Gastrocnemius medialis (tissue), 4 donors: ENCODE measurements at regions of chr15 and their contacts with region 1.

Region 1: DNA sequence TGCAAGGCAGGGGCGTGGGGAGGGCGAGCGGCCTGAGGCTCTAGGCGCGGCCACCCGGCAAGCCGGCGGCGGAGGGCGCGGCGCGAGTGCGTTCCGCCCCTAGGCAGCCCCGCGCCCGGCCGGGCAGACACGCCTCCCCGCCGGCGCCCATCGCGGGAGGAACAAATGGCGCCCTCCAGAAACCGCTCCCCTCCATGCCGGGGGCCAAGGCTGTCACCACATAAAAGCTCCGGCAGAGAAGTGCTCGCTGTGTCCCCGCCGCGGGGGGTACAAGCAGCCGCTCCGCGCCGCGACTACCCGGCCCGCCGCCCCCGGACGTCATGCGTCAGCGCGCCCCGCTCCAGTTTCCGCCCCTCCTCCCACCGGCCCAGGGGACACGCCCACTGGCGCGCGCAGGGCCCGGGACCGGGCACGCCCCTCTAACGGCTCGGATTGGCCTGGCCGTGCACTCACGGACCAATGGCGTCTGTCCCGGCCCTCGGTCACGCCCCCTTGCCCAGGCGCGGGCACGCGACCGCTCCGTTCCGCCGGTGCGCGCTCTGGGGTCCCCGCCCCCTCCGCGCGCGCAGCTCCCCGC is 391 bp upstream of the KLF13 start:
- DNase-seq: peak; percentile 97 to 99
- ATAC-seq: peak; percentile 67 to 70
- H3K4me3 ChIP-seq: peak overlapping the region; percentile 72 to 97 (median 88)
- H3K27ac ChIP-seq: peak overlapping the region; percentile 93 to 99 (median 98)
- H3K4me1 ChIP-seq: peaks cover 29 to 34% of the 10 kb centered on the region in 2 donors
- H3K27me3 ChIP-seq: no peaks in the 10 kb centered on the region
- CTCF ChIP-seq: peak in 3 of 5 experiments; percentile 3 to 33 (median 21)
- POLR2A ChIP-seq: peak; percentile 97 to 99

Region 2: DNA sequence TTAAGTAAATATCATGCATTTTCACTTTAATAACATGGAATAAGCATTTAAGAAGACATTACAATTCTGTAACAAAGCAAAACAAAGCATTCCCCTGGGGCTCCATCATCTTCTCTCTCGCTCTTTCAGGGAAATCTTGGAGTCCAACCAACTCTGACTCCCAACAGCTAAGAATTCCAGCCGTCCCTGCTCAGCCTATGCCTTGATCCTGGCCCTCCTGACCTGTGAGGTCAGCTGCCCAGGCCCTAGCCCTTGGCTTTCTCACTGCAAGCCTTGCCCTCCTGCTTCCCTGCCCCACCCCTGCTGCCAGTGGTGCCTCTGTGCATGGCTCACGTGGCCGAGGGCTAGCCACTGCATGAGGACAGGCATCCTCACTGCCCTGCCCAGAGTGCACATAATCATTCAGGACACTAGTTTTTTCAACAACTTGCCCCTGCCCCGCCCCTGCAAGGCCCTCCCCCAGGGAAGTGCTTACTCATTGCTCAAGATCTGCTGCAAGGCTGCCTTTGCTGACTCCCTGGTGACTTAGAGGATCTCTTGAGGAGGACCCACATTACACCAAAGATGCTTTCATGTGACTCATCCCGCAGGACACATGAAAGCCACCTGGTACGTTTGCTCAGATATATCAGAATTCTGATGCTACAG is 372.4 kb before region 1 on chr15:
- in situ Hi-C with region 1: loop called in 1 of 4 experiments (anchors 25 kb)
- intact Hi-C with region 1: no loop called
- DNase-seq: peak; percentile 30 to 80
- ATAC-seq: peak; percentile 66 to 73
- H3K4me3 ChIP-seq: no peak overlapping the region
- H3K27ac ChIP-seq: peak overlapping the region; percentile 83 to 95 (median 84)
- H3K4me1 ChIP-seq: peaks cover 14 to 38% of the 10 kb centered on the region in 2 donors
- H3K27me3 ChIP-seq: no peaks in the 10 kb centered on the region
- CTCF ChIP-seq: no peak
- POLR2A ChIP-seq: peak in 1 of 2 donors; percentile 24

Region 3: GRCh38 chr15:31349233-31350141 is 23.2 kb after region 1 on chr15:
- in situ Hi-C with region 1: no loop called
- intact Hi-C with region 1: loop called (anchors 2 kb)
- DNase-seq: peak; percentile 86 to 97
- ATAC-seq: peak; percentile 44 to 64
- H3K4me3 ChIP-seq: peak overlapping the region in 1 of 4 donors; percentile 14
- H3K27ac ChIP-seq: peak overlapping the region; percentile 95 to 100 (median 97)
- H3K4me1 ChIP-seq: peaks cover 100% of the 10 kb centered on the region in 2 donors
- H3K27me3 ChIP-seq: no peaks in the 10 kb centered on the region
- CTCF ChIP-seq: peak in 1 of 5 experiments; percentile 33
- POLR2A ChIP-seq: peak; percentile 65 to 75

Region 4: GRCh38 chr15:31435261-31435911 is 109.1 kb after region 1 on chr15:
- in situ Hi-C with region 1: loop called in 1 of 4 experiments (anchors 25 kb)
- intact Hi-C with region 1: loop called (anchors 2 kb)
- DNase-seq: peak; percentile 59 to 81
- ATAC-seq: peak; percentile 77 to 90
- H3K4me3 ChIP-seq: peak overlapping the region in 3 of 4 donors; percentile 3 to 23 (median 7)
- H3K27ac ChIP-seq: peak overlapping the region; percentile 58 to 69 (median 64)
- H3K4me1 ChIP-seq: peaks cover 13 to 14% of the 10 kb centered on the region in 2 donors
- H3K27me3 ChIP-seq: no peaks in the 10 kb centered on the region
- CTCF ChIP-seq: peak; percentile 60 to 80 (median 68)
- POLR2A ChIP-seq: no peak

Region 5: DNA sequence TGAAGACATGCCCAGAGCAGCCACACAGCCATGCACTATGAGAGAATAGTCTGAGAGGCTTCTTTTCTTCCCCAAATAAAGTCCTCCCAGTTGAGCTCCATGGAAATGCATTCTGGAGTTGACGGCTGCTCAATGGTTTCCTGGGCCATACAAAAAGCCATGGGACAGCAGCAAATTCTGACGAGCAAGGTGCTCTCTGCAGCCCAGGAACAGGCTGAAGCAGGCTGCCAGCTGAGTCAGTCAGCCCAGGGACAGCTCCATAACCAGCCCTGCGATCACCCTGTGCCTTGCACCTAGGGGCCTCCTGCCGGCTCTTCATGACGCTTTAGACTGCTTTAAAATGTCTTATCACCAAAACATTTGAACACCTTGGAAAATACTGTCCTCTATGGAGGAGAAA is 447.8 kb after region 1 on chr15:
- in situ Hi-C with region 1: no loop called
- intact Hi-C with region 1: no loop called
- DNase-seq: no peak
- ATAC-seq: no peak
- H3K4me3 ChIP-seq: no peak overlapping the region
- H3K27ac ChIP-seq: no peak overlapping the region
- H3K4me1 ChIP-seq: no peaks in the 10 kb centered on the region
- H3K27me3 ChIP-seq: no peaks in the 10 kb centered on the region
- CTCF ChIP-seq: no peak
- POLR2A ChIP-seq: no peak